ENCODE measurements at regions of chr5 and their contacts with region 1.

Region 1: GRCh38 chr5:153399595-153399994 is 90.9 kb upstream of the GRIA1 start:
- DNase-seq: no peak
- ATAC-seq: peak; percentile 33
- H3K4me3 ChIP-seq: no peak overlapping the region
- H3K27ac ChIP-seq: peak overlapping the region; percentile 57 to 59
- H3K4me1 ChIP-seq: peaks cover 0 to 10% of the 10 kb centered on the region in 2 donors
- H3K27me3 ChIP-seq: no peaks in the 10 kb centered on the region

Region 2: GRCh38 chr5:153079378-153079777 is 320.2 kb before region 1 on chr5:
- intact Hi-C with region 1: no loop called
- DNase-seq: no peak
- ATAC-seq: no peak
- H3K4me3 ChIP-seq: no peak overlapping the region
- H3K27ac ChIP-seq: no peak overlapping the region
- H3K4me1 ChIP-seq: peaks cover 0 to 1% of the 10 kb centered on the region in 2 donors
- H3K27me3 ChIP-seq: no peaks in the 10 kb centered on the region

Region 3: GRCh38 chr5:153340139-153340538 is 59.5 kb before region 1 on chr5:
- intact Hi-C with region 1: loop called (anchors 5 kb)
- DNase-seq: no peak
- ATAC-seq: no peak
- H3K4me3 ChIP-seq: no peak overlapping the region
- H3K27ac ChIP-seq: no peak overlapping the region
- H3K4me1 ChIP-seq: peaks cover 3 to 4% of the 10 kb centered on the region in 2 donors
- H3K27me3 ChIP-seq: no peaks in the 10 kb centered on the region

Region 4: GRCh38 chr5:153678617-153679329 is 279.2 kb after region 1 on chr5:
- intact Hi-C with region 1: no loop called
- DNase-seq: no peak
- ATAC-seq: no peak
- H3K4me3 ChIP-seq: no peak overlapping the region
- H3K27ac ChIP-seq: no peak overlapping the region
- H3K4me1 ChIP-seq: no peaks in the 10 kb centered on the region
- H3K27me3 ChIP-seq: no peaks in the 10 kb centered on the region

Measured in aorta (tissue), 5 donors.